Left lung (tissue), 14 donors: ENCODE measurements at regions of chr12 and their contacts with region 1.

Region 1: GRCh38 chr12:75489613-75490210 is 9.2 kb downstream of the GLIPR1 start:
- DNase-seq: no peak
- ATAC-seq: no peak
- H3K4me3 ChIP-seq: no peak overlapping the region
- H3K27ac ChIP-seq: no peak overlapping the region
- H3K4me1 ChIP-seq: peaks cover 0 to 10% of the 10 kb centered on the region in 2 donors
- H3K27me3 ChIP-seq: no peaks in the 10 kb centered on the region
- CTCF ChIP-seq: no peak

Region 2: GRCh38 chr12:75334384-75335030 is 155.2 kb before region 1 on chr12 and contains the start of gene GLIPR1L1:
- intact Hi-C with region 1: loop called in 1 of 2 experiments (anchors 10 kb)
- DNase-seq: peak; percentile 76 to 85 (median 82)
- ATAC-seq: peak; percentile 89
- H3K4me3 ChIP-seq: peak within 1 kb of the TSS in 1 of 2 donors; percentile 24
- H3K27ac ChIP-seq: no peak within 1 kb of the TSS
- H3K4me1 ChIP-seq: peaks cover 2 to 22% of the 10 kb centered on the region in 2 donors
- H3K27me3 ChIP-seq: peaks cover 0 to 3% of the 10 kb centered on the region in 2 donors
- CTCF ChIP-seq: peak; percentile 84 to 94
- polyA plus RNA-seq, gene GLIPR1L1: 0.21 to 1.1 (median 0.75) TPM in 5 of 6 donors, not detected in the other

Region 3: DNA sequence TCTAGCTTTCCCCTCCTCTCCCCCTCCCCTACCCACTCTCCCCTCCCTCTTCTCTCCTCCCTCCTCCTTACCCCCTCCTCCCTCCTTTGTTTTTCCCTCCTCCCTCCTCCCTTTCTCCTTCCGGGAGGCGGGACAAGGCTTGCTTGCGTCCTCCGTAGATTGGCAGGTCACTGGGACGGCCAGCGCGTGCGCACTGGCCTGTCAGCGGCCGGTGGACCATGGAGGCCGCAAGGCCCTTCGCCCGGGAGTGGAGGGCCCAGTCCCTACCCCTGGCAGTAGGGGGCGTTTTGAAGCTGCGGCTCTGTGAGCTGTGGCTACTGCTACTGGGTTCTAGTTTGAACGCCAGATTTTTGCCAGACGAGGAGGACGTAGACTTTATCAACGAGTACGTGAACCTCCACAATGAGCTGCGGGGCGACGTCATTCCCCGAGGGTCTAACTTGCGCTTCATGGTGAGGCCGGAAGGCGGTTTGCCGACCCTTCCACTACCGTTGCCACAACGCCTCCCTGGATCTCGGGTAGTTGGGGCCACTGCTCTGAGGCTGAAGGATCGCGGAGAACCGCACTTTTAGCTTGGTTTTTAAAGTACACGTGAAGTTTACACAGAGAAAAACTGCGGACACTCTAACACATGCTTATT is 98.7 kb before region 1 on chr12 and contains the start of gene GLIPR1L2:
- intact Hi-C with region 1: no loop called
- DNase-seq: peak; percentile 87 to 99 (median 97)
- ATAC-seq: peak; percentile 100
- H3K4me3 ChIP-seq: peak within 1 kb of the TSS; percentile 45 to 52
- H3K27ac ChIP-seq: peak within 1 kb of the TSS; percentile 91 to 93
- H3K4me1 ChIP-seq: peaks cover 0 to 27% of the 10 kb centered on the region in 2 donors
- H3K27me3 ChIP-seq: no peaks in the 10 kb centered on the region
- CTCF ChIP-seq: peak; percentile 85 to 90
- polyA plus RNA-seq, gene GLIPR1L2: 0.98 to 3.0 (median 2.3) TPM

Region 4: GRCh38 chr12:75613981-75614380 is 124.3 kb after region 1 on chr12:
- intact Hi-C with region 1: no loop called
- DNase-seq: no peak
- ATAC-seq: no peak
- H3K4me3 ChIP-seq: no peak overlapping the region
- H3K27ac ChIP-seq: no peak overlapping the region
- H3K4me1 ChIP-seq: no peaks in the 10 kb centered on the region
- H3K27me3 ChIP-seq: no peaks in the 10 kb centered on the region
- CTCF ChIP-seq: no peak